ENCODE measurements at regions of chr10 and their contacts with region 1.

Region 1: DNA sequence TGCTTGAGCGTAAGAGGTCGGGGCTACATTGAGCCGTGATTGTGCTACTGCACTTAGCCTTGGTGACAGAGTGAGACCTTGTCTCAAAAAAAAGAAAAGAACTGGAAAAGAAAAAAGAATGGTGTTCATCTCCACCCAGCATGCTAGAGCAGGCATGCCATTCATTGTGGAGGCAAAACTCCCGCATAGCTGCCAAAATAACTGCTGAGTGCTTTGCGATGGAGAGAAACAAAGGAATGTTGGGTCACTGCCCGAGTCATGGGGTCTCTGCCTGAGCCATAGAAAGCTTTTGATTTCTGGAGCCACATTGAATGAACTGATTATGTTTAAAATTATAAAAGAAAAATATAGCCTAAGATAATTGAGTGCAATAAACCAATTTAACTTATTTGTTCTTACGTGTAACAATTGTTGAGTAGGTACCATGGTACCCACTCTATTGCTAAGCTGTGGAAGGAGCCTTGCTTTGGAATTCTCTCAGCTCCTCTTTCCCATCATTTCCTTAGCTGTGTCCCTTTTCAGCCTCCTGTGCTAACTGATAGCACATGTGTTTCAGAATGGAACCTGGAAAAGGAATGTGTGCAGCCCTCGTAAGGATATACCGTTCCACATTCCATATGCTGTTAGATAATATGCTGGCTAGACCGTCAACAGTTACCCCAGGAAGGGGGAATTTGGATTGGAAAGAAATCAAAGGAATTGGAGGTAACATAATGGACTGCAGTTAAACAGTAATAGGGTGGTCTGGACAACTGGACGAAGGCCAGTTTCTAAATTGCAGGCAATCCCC is 99.0 kb downstream of the KIAA1217 start:
- DNase-seq: no peak
- H3K4me3 ChIP-seq: no peak overlapping the region
- H3K27ac ChIP-seq: no peak overlapping the region
- H3K4me1 ChIP-seq: no peaks in the 10 kb centered on the region
- H3K27me3 ChIP-seq: no peaks in the 10 kb centered on the region
- CTCF ChIP-seq: no peak

Region 2: DNA sequence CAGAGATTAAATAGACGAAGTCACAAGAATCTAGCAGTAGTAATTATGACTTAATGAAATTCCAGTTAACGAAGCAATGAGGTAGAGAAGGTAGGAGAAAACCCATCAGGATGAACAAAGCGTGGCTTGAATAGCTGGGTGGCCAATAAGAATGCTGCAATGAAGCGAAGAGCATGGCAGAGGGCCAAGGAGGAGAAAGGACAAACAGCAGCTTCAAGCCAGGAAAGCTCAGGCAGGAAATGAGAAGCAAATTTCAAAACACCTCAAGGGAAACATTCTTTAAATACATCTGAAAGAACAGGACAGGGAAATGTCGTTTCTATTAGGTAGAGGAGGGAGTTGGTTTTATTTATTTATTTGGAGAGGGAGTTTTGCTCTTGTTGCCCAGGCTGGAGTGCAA is 23.6 kb after region 1 on chr10:
- intact Hi-C with region 1: loop called (anchors 2 kb)
- DNase-seq: peak; percentile 78
- H3K4me3 ChIP-seq: no peak overlapping the region
- H3K27ac ChIP-seq: no peak overlapping the region
- H3K4me1 ChIP-seq: no peaks in the 10 kb centered on the region
- H3K27me3 ChIP-seq: no peaks in the 10 kb centered on the region
- CTCF ChIP-seq: no peak